GM10248 (cell line): ENCODE measurements at regions of chr11 and their contacts with region 1.

Region 1: DNA sequence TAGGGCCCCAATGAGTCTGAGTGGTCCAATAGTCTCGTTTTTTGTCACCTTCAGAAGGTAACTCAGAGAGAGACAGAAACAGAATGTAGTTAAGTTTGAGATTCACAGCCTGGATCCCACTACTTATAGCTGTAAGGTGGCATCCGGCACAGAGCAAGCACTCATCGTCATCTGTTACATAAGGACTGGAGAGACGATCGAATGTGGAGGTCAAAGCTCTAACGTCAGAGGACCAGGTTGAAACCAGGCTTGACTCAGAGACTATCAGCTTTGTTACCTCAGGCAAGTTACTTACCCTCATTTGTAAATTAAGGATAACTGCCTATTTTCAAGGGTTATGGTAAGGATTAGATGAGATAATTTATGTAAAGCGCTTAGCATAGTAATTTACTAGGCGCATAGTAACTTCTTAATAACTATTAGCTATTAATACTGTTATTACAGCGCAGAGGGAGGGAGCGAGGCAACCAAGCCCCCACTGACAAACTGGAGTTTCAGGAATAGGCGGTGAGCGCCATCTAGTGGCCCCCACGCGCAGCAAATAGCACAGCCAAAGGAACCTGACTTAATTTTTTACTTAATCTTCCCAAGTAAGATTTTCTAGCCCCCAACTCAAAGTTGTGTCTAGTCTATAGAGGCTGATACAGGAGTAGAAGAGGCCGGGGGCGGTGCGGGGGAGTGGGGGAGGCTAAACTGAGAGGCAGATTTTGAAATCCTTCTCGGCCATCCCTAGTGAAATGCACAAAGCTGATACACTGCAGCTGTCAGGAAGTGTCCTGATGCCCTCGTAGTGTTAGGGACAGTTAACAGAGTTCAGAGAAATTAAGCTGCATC is 29.0 kb upstream of the API5 start:
- DNase-seq: peak; percentile 59
- CTCF ChIP-seq: peak; percentile 95

Region 2: GRCh38 chr11:42770444-42771065 is 512.3 kb before region 1 on chr11:
- CTCF ChIA-PET with region 1: interaction called, 22 read pairs
- POLR2A ChIA-PET with region 1: no interaction called
- DNase-seq: peak; percentile 20
- CTCF ChIP-seq: peak; percentile 69

Region 3: GRCh38 chr11:43269254-43269918 is 13.4 kb before region 1 on chr11:
- CTCF ChIA-PET with region 1: interaction called, 33 read pairs
- POLR2A ChIA-PET with region 1: no interaction called
- DNase-seq: no peak
- CTCF ChIP-seq: no peak

Region 4: GRCh38 chr11:43311791-43312607 is 29.2 kb after region 1 on chr11 and contains the start of gene API5:
- CTCF ChIA-PET with region 1: interaction called, 21 read pairs
- POLR2A ChIA-PET with region 1: no interaction called
- DNase-seq: peak; percentile 86
- CTCF ChIP-seq: peak; percentile 90